B cell (primary cell): ENCODE measurements at regions of chr2 and their contacts with region 1.

Region 1: GRCh38 chr2:37180006-37180639 is 8.3 kb downstream of the SULT6B1 start:
- DNase-seq: no peak
- ATAC-seq: no peak
- H3K4me3 ChIP-seq: no peak overlapping the region
- H3K4me3 Mint-ChIP-seq: no peak overlapping the region
- H3K27ac ChIP-seq: no peak overlapping the region
- H3K27ac Mint-ChIP-seq: no peak overlapping the region
- H3K4me1 ChIP-seq: no peaks in the 10 kb centered on the region
- H3K4me1 Mint-ChIP-seq: no peaks in the 10 kb centered on the region
- H3K27me3 ChIP-seq: no peaks in the 10 kb centered on the region
- H3K27me3 Mint-ChIP-seq: peaks cover 16% of the 10 kb centered on the region
- CTCF ChIP-seq: no peak

Region 2: GRCh38 chr2:37168217-37168981 is 11.7 kb before region 1 on chr2:
- CTCF ChIA-PET with region 1: interaction called, 14 read pairs
- POLR2A ChIA-PET with region 1: no interaction called
- intact Hi-C with region 1: no loop called
- DNase-seq: peak; percentile 59
- ATAC-seq: peak; percentile 64
- H3K4me3 ChIP-seq: no peak overlapping the region
- H3K4me3 Mint-ChIP-seq: no peak overlapping the region
- H3K27ac ChIP-seq: no peak overlapping the region
- H3K27ac Mint-ChIP-seq: no peak overlapping the region
- H3K4me1 ChIP-seq: no peaks in the 10 kb centered on the region
- H3K4me1 Mint-ChIP-seq: peaks cover 2% of the 10 kb centered on the region
- H3K27me3 ChIP-seq: no peaks in the 10 kb centered on the region
- H3K27me3 Mint-ChIP-seq: no peaks in the 10 kb centered on the region
- CTCF ChIP-seq: peak; percentile 83